T-cell (primary cell): ENCODE measurements at regions of chr19 and their contacts with region 1.

Region 1: DNA sequence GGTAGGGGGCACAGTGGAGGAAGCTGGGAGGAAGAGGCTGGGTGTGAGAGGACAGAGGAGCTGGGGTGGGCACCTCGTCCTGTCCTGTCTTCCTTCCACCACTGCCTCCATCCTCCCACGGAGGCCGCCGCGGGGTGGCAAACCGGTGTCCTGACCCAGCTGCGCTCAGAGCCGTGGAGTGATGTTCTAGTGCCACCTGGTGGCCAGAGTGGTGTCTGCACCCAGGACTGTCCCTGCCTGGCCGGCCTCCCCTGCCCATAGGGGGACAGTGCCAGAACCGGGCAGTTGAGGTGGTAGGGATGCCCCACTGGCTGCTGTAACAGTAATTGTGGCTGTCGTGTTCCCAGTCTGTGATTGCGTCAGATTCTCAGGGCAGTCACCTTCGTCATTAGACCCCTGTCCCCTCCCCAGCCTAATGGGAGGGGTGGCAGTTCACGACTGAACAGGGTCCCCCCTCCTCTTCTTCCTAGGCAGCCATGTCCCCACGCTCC is 11.1 kb upstream of the ARRDC2 start:
- DNase-seq: peak; percentile 57 to 92 (median 80)
- ATAC-seq: peak; percentile 21 to 40 (median 30)
- H3K4me3 ChIP-seq: no peak overlapping the region
- H3K4me3 Mint-ChIP-seq: no peak overlapping the region
- H3K27ac ChIP-seq: no peak overlapping the region
- H3K27ac Mint-ChIP-seq: no peak overlapping the region
- H3K4me1 ChIP-seq: peaks cover under 1 to 31% of the 10 kb centered on the region in 2 experiments
- H3K4me1 Mint-ChIP-seq: peaks cover 16 to 25% (median 24%) of the 10 kb centered on the region in 3 donors
- H3K27me3 ChIP-seq: peaks cover 0 to 15% of the 10 kb centered on the region in 2 experiments
- H3K27me3 Mint-ChIP-seq: no peaks in the 10 kb centered on the region

Region 2: GRCh38 chr19:17938092-17938845 is 58.6 kb before region 1 on chr19:
- CTCF ChIA-PET with region 1: interaction called, 24 to 43 read pairs
- POLR2A ChIA-PET with region 1: interaction called, 6 to 7 read pairs
- DNase-seq: peak; percentile 52 to 92 (median 77)
- ATAC-seq: peak; percentile 90 to 96 (median 90)
- H3K4me3 ChIP-seq: no peak overlapping the region
- H3K4me3 Mint-ChIP-seq: no peak overlapping the region
- H3K27ac ChIP-seq: no peak overlapping the region
- H3K27ac Mint-ChIP-seq: no peak overlapping the region
- H3K4me1 ChIP-seq: peaks cover 4 to 15% of the 10 kb centered on the region in 2 experiments
- H3K4me1 Mint-ChIP-seq: peaks cover 7 to 8% (median 7%) of the 10 kb centered on the region in 3 donors
- H3K27me3 ChIP-seq: no peaks in the 10 kb centered on the region
- H3K27me3 Mint-ChIP-seq: no peaks in the 10 kb centered on the region

Region 3: GRCh38 chr19:18093439-18094161 is 96.7 kb after region 1 on chr19:
- CTCF ChIA-PET with region 1: no interaction called
- POLR2A ChIA-PET with region 1: no interaction called
- DNase-seq: no peak
- ATAC-seq: no peak
- H3K4me3 ChIP-seq: no peak overlapping the region
- H3K4me3 Mint-ChIP-seq: no peak overlapping the region
- H3K27ac ChIP-seq: no peak overlapping the region
- H3K27ac Mint-ChIP-seq: peak overlapping the region; percentile 52 to 82
- H3K4me1 ChIP-seq: peaks cover 38 to 65% of the 10 kb centered on the region in 2 experiments
- H3K4me1 Mint-ChIP-seq: peaks cover 55 to 62% (median 59%) of the 10 kb centered on the region in 3 donors
- H3K27me3 ChIP-seq: no peaks in the 10 kb centered on the region
- H3K27me3 Mint-ChIP-seq: no peaks in the 10 kb centered on the region

Region 4: GRCh38 chr19:18128044-18128443 is 131.2 kb after region 1 on chr19:
- CTCF ChIA-PET with region 1: no interaction called
- POLR2A ChIA-PET with region 1: no interaction called
- DNase-seq: no peak
- ATAC-seq: no peak
- H3K4me3 ChIP-seq: no peak overlapping the region
- H3K4me3 Mint-ChIP-seq: no peak overlapping the region
- H3K27ac ChIP-seq: no peak overlapping the region
- H3K27ac Mint-ChIP-seq: peak overlapping the region in 1 of 2 donors; percentile 43
- H3K4me1 ChIP-seq: peaks cover 0 to 21% of the 10 kb centered on the region in 2 experiments
- H3K4me1 Mint-ChIP-seq: peaks cover 0 to 5% (median 0%) of the 10 kb centered on the region in 3 donors
- H3K27me3 ChIP-seq: no peaks in the 10 kb centered on the region
- H3K27me3 Mint-ChIP-seq: no peaks in the 10 kb centered on the region

Region 5: DNA sequence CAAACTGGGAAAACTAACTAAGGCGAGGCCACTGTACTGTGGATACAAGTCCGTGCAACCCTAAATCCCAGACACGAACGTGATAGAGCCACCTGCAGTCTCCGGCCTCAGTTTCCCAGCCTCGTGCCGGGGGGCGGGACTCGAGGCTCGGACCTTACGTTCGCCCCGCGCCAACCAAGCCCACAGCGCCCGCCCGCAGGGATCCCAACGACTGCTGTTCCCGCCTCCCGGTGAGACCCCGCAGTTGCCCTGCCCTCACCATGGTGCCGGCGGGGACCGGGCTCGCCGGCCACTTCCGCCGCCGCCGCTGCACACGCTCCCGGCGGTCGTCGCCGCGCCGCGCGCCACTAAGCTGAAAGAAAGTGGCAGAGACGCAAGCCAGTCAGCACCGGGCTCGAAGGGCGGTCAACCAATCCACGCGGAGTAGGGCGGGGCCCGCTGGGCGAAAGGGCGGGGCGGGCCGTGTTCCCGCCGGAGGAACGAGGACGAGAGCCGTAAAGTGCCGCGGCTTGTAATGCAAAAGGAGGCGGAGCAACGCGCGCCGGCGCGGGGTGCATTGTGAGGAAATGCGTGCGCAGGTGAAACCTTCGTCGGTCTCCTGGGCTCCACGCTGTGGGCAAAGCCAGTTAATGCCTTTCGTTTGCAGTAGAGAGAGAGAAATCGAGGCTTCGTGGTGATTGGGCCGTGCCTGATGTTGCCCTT is 326.0 kb after region 1 on chr19 and contains the start of gene LSM4:
- CTCF ChIA-PET with region 1: no interaction called
- POLR2A ChIA-PET with region 1: no interaction called
- DNase-seq: peak; percentile 99 to 100 (median 99)
- ATAC-seq: peak; percentile 92 to 95 (median 94)
- H3K4me3 ChIP-seq: peak within 1 kb of the TSS; percentile 84 to 93
- H3K4me3 Mint-ChIP-seq: peak within 1 kb of the TSS; percentile 80 to 86 (median 82)
- H3K27ac ChIP-seq: peak within 1 kb of the TSS; percentile 94
- H3K27ac Mint-ChIP-seq: peak within 1 kb of the TSS; percentile 96 to 98
- H3K4me1 ChIP-seq: peaks cover 36 to 62% of the 10 kb centered on the region in 2 experiments
- H3K4me1 Mint-ChIP-seq: peaks cover 52 to 55% (median 54%) of the 10 kb centered on the region in 3 donors
- H3K27me3 ChIP-seq: no peaks in the 10 kb centered on the region
- H3K27me3 Mint-ChIP-seq: no peaks in the 10 kb centered on the region
- total RNA-seq, gene LSM4: 58.5 to 82.7 (median 69.1) TPM